ENCODE measurements at regions of chr5 and their contacts with region 1.

Region 1: DNA sequence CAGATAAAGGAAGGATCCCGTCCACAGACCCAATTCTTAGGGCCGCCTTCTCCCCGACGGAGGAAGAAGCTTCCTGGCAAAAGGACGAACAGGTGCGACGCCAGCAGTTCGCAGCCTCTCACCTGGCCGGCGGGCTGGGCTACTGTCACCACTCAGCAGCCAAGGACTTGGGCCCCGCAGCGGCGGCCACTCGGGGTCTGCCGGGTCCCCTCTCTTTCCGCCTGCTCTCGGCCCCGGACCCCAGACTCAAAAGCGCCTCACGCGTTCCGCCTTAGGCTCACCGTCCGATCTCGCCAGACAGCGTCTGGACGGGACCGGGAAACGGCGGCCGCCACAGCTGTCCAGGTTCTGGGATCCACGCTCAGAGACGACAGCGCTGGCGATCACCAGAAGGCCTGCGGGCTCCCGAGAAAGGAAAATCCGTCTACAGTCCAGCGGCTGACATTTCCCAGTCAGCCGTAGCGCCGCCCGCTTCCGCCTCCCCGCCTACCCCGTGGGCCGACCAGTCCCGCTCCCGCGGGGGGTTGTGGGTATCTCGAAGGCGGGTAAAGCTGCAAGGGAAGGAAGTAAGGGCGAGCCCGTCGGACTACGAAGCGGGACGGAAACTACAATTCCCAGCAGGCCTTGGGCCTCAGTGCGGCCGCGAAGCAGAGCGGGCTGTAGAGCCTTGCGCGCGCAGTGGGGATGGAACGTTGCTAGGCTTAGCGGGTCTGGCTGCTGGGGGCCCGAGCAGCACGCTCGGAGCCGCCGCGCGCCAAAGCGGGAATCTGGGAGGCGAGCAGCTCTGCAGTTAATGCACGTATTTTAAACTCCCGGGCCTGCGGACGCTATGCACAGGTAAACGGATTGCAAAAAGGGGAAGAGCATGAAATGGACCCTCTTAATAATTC is at the starts of genes LMBRD2 and SKP2:
- DNase-seq: peak; percentile 94 to 97 (median 95)
- H3K4me3 ChIP-seq: peak within 1 kb of the TSS; percentile 92
- H3K27ac ChIP-seq: peak within 1 kb of the TSS; percentile 18 to 42
- H3K4me1 ChIP-seq: peaks cover 3% of the 10 kb centered on the region
- H3K27me3 ChIP-seq: no peaks in the 10 kb centered on the region
- CTCF ChIP-seq: no peak
- EP300 ChIP-seq: no peak
- POLR2A ChIP-seq: no peak
- total RNA-seq, gene LMBRD2: 5.4 to 8.8 (median 6.3) TPM
- total RNA-seq, gene SKP2: 7.9 to 15.4 (median 13.7) TPM

Region 2: DNA sequence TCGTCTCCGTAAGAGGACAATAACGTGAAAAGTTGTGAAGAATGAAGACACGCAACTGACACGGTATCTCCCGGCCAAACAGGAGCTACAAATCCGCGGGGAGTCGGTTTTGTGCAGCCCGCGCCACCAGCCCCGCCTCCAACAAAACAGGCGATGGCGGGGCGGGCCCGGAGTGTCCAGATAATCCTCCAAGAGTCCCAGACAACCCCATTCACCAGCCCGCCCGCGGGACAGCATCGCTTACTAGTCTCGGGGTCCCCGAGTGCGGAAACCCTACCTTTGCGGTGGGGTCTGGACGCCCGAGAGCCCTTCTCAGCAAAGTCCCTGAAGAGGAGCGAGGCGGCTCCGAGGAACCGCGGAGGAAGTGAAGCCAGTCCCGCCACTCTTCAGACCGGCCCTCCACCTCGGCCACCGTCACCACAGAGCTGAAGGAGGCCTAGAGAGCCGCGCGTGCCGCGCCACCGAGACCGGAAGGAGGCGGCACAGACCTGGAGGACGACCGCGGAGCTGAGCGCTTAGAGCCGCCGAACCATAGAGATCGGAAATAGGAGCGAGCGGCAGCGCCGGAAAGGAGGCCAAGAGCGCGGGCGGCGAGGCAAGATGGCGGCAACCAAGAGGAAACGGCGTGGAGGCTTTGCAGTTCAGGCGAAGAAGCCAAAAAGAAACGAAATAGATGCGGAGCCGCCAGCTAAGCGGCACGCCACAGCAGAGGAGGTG is 1236.4 kb before region 1 on chr5 and contains the starts of genes BRIX1 and RAD1:
- intact Hi-C with region 1: loop called in 1 of 4 experiments (anchors 10 kb)
- DNase-seq: peak; percentile 92 to 97 (median 93)
- H3K4me3 ChIP-seq: peak within 1 kb of the TSS; percentile 87
- H3K27ac ChIP-seq: peak within 1 kb of the TSS; percentile 49 to 90
- H3K4me1 ChIP-seq: peaks cover 6% of the 10 kb centered on the region
- H3K27me3 ChIP-seq: no peaks in the 10 kb centered on the region
- CTCF ChIP-seq: peak in 1 of 3 donors; percentile 50
- EP300 ChIP-seq: no peak
- POLR2A ChIP-seq: peak; percentile 16
- total RNA-seq, gene BRIX1: 15.5 to 33.9 (median 23.9) TPM
- total RNA-seq, gene RAD1: 7.6 to 21.9 (median 18.5) TPM

Region 3: GRCh38 chr5:35029333-35029732 is 1122.3 kb before region 1 on chr5:
- intact Hi-C with region 1: no loop called
- DNase-seq: no peak
- H3K4me3 ChIP-seq: no peak overlapping the region
- H3K27ac ChIP-seq: no peak overlapping the region
- H3K4me1 ChIP-seq: no peaks in the 10 kb centered on the region
- H3K27me3 ChIP-seq: no peaks in the 10 kb centered on the region
- CTCF ChIP-seq: no peak
- EP300 ChIP-seq: no peak
- POLR2A ChIP-seq: no peak